Left ventricle myocardium superior (tissue), 1 donor: ENCODE measurements at regions of chr2 and their contacts with region 1.

Region 1: DNA sequence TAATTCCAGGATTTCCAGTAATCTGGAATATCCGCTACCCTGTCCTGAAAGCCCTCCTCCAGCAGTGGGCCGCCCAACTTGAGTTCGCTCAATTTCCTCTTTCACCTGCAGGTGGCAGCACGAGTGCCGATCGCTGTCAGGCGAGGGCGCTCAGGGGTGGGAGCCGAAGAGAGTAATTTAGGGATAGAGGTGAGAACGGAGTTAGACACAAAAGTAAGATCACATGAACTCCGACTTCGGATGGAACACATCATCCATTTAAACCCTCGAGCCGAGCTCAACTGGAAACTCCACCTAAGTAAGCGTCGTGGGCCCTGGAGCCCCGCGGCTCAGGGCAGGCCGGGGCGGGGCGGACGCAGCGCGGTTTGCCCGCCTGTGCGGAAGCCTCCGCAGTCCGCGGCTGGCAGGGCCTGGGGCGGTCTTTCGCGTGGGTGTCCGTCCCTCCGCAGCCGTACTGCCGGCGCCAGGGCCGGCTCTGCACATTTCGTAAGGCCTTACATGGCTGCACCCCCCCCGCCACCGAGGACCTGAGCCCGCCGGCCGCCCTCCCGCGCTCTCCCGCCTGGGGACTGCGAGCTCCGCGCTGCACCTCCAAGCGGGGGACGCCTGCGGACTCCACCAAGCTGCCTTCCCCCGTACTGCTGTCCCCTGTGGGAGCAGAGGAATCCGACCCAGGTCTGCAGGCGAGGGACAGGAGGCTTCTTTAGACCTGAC is 61.2 kb downstream of the SEMA4F start:
- DNase-seq: peak; percentile 85
- ATAC-seq: peak; percentile 98

Region 2: GRCh38 chr2:74345272-74345943 is 369.8 kb before region 1 on chr2:
- intact Hi-C with region 1: no loop called
- DNase-seq: no peak
- ATAC-seq: no peak

Region 3: GRCh38 chr2:74876081-74876886 is 161.0 kb after region 1 on chr2:
- intact Hi-C with region 1: loop called (anchors 2 kb)
- DNase-seq: no peak
- ATAC-seq: peak; percentile 83